ENCODE measurements at regions of chr12 and their contacts with region 1.

Region 1: DNA sequence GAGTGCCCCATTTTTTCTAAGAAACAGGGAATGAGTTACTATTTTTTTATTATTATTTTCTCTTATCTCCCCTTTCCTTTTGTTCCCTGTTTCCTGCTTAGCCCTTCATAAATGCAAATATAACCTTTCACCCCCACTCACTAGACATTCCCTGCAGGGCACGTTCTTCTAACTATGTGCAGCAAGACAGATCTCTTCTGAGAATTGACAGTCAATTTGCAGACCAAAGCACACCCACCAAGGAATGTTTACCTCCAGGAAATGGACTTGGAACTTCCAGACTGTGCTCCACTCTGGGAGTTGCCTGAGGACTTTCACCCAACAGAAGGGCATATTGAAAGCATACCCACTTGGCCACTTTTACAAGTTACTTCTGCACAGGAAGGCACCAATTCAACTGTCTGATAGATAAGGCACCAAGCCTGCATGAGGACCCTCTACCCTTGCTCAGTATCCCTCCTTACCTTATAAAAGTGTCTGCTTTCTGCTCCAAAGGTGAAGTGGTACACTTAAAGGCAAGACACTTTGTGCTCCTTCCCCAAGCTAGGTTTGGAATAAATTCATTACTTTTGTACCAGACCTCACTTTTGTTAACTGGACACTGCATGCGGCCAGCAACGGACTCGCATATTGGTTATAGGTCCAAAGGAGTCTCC is 6.5 kb downstream of the TAS2R19 start:
- DNase-seq: no peak
- ATAC-seq: no peak
- H3K4me3 ChIP-seq: no peak overlapping the region
- H3K4me3 Mint-ChIP-seq: no peak overlapping the region
- H3K27ac ChIP-seq: no peak overlapping the region
- H3K27ac Mint-ChIP-seq: no peak overlapping the region
- H3K4me1 ChIP-seq: no peaks in the 10 kb centered on the region
- H3K4me1 Mint-ChIP-seq: peaks cover 8% of the 10 kb centered on the region
- H3K27me3 ChIP-seq: no peaks in the 10 kb centered on the region
- H3K27me3 Mint-ChIP-seq: no peaks in the 10 kb centered on the region
- CTCF ChIP-seq: no peak

Region 2: DNA sequence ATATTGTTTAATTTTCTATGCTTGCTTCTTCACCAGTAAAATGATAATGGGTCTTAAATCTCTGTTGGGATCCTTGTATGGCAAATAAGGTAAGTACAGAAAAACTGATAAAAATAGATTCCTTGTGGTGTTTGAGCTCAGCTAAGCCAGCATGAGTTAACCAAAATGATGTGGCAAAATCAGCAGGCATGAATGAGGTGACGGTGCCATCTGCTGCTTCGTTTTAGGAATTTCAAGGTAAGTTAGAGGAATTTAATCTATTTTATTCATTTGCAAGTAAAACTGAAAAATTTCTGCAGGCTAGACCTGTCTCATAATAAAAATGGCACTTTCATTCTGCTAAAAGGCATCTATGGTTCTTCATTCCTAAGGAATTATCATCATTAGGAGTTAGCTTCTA is 875.9 kb before region 1 on chr12:
- CTCF ChIA-PET with region 1: no interaction called
- POLR2A ChIA-PET with region 1: no interaction called
- intact Hi-C with region 1: no loop called
- DNase-seq: peak in 13 of 14 experiments; percentile 10 to 74 (median 22)
- ATAC-seq: peak; percentile 60
- H3K4me3 ChIP-seq: no peak overlapping the region
- H3K4me3 Mint-ChIP-seq: no peak overlapping the region
- H3K27ac ChIP-seq: no peak overlapping the region
- H3K27ac Mint-ChIP-seq: no peak overlapping the region
- H3K4me1 ChIP-seq: no peaks in the 10 kb centered on the region
- H3K4me1 Mint-ChIP-seq: no peaks in the 10 kb centered on the region
- H3K27me3 ChIP-seq: peaks cover 0 to 4% of the 10 kb centered on the region in 2 experiments
- H3K27me3 Mint-ChIP-seq: peaks cover 4% of the 10 kb centered on the region
- CTCF ChIP-seq: peak; percentile 18

Region 3: GRCh38 chr12:11630046-11630706 is 614.3 kb after region 1 on chr12:
- CTCF ChIA-PET with region 1: no interaction called
- POLR2A ChIA-PET with region 1: no interaction called
- intact Hi-C with region 1: loop called in 1 of 2 experiments (anchors 10 kb)
- DNase-seq: no peak
- ATAC-seq: no peak
- H3K4me3 ChIP-seq: no peak overlapping the region
- H3K4me3 Mint-ChIP-seq: no peak overlapping the region
- H3K27ac ChIP-seq: no peak overlapping the region
- H3K27ac Mint-ChIP-seq: no peak overlapping the region
- H3K4me1 ChIP-seq: no peaks in the 10 kb centered on the region
- H3K4me1 Mint-ChIP-seq: no peaks in the 10 kb centered on the region
- H3K27me3 ChIP-seq: no peaks in the 10 kb centered on the region
- H3K27me3 Mint-ChIP-seq: no peaks in the 10 kb centered on the region
- CTCF ChIP-seq: no peak